ENCODE measurements at regions of chr16 and their contacts with region 1.

Region 1: GRCh38 chr16:69796351-69797118 is 34.4 kb downstream of the WWP2 start:
- DNase-seq: no peak
- ATAC-seq: peak; percentile 91
- H3K4me3 ChIP-seq: no peak overlapping the region
- H3K27ac ChIP-seq: no peak overlapping the region
- H3K4me1 ChIP-seq: no peaks in the 10 kb centered on the region
- H3K27me3 ChIP-seq: no peaks in the 10 kb centered on the region
- CTCF ChIP-seq: peak; percentile 79 to 90 (median 88)
- EP300 ChIP-seq: no peak
- POLR2A ChIP-seq: no peak
- RAD21 ChIP-seq: peak; percentile 88

Region 2: GRCh38 chr16:69812688-69813014 is 16.1 kb after region 1 on chr16:
- CTCF ChIA-PET with region 1: interaction called, 14 read pairs
- POLR2A ChIA-PET with region 1: no interaction called
- RAD21 ChIA-PET with region 1: no interaction called
- SMC1A ChIA-PET with region 1: interaction called, 9 read pairs
- in situ Hi-C with region 1: no loop called
- intact Hi-C with region 1: no loop called
- DNase-seq: no peak
- ATAC-seq: no peak
- H3K4me3 ChIP-seq: no peak overlapping the region
- H3K27ac ChIP-seq: no peak overlapping the region
- H3K4me1 ChIP-seq: no peaks in the 10 kb centered on the region
- H3K27me3 ChIP-seq: no peaks in the 10 kb centered on the region
- CTCF ChIP-seq: no peak
- EP300 ChIP-seq: no peak
- POLR2A ChIP-seq: no peak
- RAD21 ChIP-seq: no peak

Region 3: GRCh38 chr16:69859105-69859989 is 62.8 kb after region 1 on chr16:
- CTCF ChIA-PET with region 1: interaction called, 4 read pairs
- POLR2A ChIA-PET with region 1: interaction called, 3 read pairs
- RAD21 ChIA-PET with region 1: no interaction called
- SMC1A ChIA-PET with region 1: interaction called, 4 read pairs
- in situ Hi-C with region 1: no loop called
- intact Hi-C with region 1: loop called (anchors 2 kb)
- DNase-seq: no peak
- ATAC-seq: peak; percentile 19; the same call in 1 of the 3 replicates
- H3K4me3 ChIP-seq: no peak overlapping the region
- H3K27ac ChIP-seq: no peak overlapping the region
- H3K4me1 ChIP-seq: no peaks in the 10 kb centered on the region
- H3K27me3 ChIP-seq: no peaks in the 10 kb centered on the region
- CTCF ChIP-seq: peak; percentile 20 to 40 (median 25); a peak in 4 of 6 replicates
- EP300 ChIP-seq: no peak
- POLR2A ChIP-seq: no peak
- RAD21 ChIP-seq: peak; percentile 51